ENCODE measurements at regions of chr10 and their contacts with region 1.

Region 1: GRCh38 chr10:70461215-70461986 is 17.2 kb upstream of the PALD1 start:
- DNase-seq: peak; percentile 54
- H3K4me3 ChIP-seq: no peak overlapping the region
- H3K27ac ChIP-seq: no peak overlapping the region
- H3K4me1 ChIP-seq: peaks cover 52% of the 10 kb centered on the region
- H3K27me3 ChIP-seq: no peaks in the 10 kb centered on the region
- CTCF ChIP-seq: peak; percentile 94

Region 2: DNA sequence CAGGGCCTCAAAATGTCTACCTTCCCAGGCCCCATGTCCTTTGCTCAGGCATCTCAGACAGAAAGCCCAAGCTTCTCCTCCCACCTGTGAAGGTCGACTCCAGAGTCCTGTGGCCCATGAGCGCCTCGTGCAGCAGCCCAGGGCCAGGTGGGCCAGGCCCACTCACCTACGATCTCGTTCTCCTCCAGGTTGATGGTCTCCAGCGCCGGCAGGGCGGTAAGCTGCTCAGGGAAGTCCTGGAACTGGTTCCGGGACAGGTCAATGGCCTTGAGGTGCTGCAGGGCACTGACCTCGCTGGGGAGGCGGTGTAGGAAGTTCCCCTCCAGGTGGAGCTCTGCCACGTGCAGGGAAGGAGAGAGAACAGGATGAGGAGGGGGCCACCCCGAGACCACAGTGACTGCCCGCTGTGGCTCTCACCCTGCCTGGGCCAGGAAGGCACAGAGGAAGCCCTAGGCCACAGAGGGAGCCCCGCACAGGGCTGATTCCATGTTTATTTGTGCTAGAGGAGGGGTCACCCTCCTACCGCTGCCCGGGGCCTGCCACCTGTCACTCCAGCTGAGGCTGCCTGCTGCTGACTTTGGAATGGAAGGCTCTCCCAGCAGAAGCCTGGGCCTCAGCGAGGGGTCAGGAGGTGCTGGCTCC is 137.6 kb before region 1 on chr10:
- intact Hi-C with region 1: no loop called
- DNase-seq: no peak
- H3K4me3 ChIP-seq: no peak overlapping the region
- H3K27ac ChIP-seq: peak overlapping the region; percentile 63
- H3K4me1 ChIP-seq: peaks cover 43% of the 10 kb centered on the region
- H3K27me3 ChIP-seq: no peaks in the 10 kb centered on the region
- CTCF ChIP-seq: no peak

Region 3: DNA sequence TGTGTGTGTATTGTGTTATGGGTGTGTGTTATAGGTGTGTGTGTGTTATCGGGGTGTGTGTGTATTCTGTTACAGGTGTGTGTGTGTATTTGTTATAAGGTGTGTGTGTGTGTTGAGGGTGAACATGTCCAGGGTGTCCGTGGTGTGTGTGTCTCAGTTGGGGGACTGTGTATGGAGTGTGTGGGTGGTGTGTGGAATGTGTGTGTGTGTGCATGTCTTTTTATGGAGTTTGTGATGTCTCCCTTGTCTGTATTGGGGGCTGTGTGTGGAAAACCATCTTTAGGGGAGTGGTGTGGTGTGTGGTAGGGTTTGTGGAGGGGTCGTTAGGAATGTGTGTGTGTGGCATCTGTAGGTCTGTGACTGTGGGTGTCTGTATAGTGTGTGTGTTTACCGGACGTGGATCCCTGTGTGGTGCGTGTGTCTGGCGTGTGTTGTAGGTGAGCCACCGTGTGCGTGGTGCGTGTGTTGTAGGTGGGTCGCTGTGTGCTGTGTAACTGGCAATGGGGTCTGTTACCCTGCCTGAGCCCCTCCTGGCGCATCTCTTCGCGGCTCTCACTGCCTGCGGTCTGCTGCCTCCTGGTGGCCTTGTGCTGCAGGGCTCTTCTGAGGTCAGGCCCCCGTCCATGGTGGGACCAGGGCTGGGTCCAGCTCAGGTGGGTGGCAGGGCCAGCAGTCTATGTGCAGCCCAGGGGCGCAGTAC is 78.8 kb after region 1 on chr10:
- intact Hi-C with region 1: loop called (anchors 2 kb)
- DNase-seq: no peak
- H3K4me3 ChIP-seq: no peak overlapping the region
- H3K27ac ChIP-seq: no peak overlapping the region
- H3K4me1 ChIP-seq: no peaks in the 10 kb centered on the region
- H3K27me3 ChIP-seq: no peaks in the 10 kb centered on the region
- CTCF ChIP-seq: peak; percentile 79

Region 4: GRCh38 chr10:70758757-70759514 is 297.5 kb after region 1 on chr10:
- intact Hi-C with region 1: loop called (anchors 10 kb)
- DNase-seq: peak; percentile 53
- H3K4me3 ChIP-seq: no peak overlapping the region
- H3K27ac ChIP-seq: no peak overlapping the region
- H3K4me1 ChIP-seq: peaks cover 22% of the 10 kb centered on the region
- H3K27me3 ChIP-seq: no peaks in the 10 kb centered on the region
- CTCF ChIP-seq: peak; percentile 83

Measured in left ventricle myocardium inferior (tissue), 1 donor.